Activated CD4-positive, alpha-beta T cell treated with anti-CD3 and anti-CD28 coated beads for 36 hours (primary cell): ENCODE measurements at regions of chr1 and their contacts with region 1.

Region 1: DNA sequence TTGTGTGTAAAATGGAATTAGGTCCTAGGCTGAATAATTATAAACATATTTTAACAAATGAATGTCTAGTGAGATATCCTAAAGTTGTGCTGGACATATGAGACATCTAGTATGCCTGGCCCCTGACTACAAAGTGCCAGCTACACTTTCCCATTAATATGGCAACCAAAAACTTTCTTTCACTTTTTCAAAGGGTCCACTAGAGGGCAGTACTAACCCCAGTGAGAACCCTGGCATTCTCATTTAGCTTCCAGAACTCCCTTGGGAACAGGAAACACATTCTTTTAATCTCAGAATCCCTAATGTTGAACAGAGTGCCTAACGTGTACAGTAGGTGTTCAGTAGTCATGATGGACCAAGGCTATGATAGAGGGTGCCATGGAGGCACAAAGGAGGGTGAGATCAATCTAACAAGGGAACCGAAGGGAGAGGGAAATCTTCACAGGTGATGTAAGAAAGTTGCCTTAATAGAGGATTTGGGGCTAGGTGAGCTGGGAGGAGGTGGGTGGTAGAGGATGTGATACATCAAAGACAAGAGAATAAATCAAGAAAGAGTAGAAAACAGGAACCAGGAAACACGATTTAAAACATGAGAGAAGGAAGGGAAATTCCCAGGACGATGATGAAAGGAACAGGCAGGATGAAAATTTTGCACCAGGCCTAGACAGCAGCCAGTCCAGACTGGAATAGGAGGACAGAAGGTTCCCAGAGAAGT is 41.6 kb downstream of the NSL1 start:
- DNase-seq: peak; percentile 27
- ATAC-seq: peak; percentile 30
- H3K4me3 Mint-ChIP-seq: peak overlapping the region; percentile 20
- H3K27ac Mint-ChIP-seq: peak overlapping the region; percentile 40
- H3K4me1 Mint-ChIP-seq: peaks cover 71% of the 10 kb centered on the region
- H3K27me3 Mint-ChIP-seq: no peaks in the 10 kb centered on the region

Region 2: DNA sequence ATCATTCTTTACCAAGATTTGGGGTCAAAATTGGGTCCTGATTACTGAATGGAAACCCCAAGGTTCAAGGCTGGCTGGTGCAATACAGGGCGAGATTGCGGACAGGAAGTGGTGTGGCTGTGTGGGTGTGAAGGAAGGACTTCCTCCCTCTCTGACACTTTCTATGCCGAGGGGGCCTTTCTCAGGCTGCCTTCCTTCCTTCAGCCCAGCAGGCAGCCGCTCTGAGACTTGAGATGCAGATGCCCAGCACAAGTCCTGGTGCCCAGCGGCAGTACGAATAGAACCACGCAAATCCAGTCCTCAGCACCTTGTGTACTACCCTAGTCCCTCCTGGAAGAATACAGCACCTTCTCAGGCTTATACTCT is 66.6 kb before region 1 on chr1:
- CTCF ChIA-PET with region 1: interaction called, 13 read pairs
- POLR2A ChIA-PET with region 1: no interaction called
- intact Hi-C with region 1: loop called in 1 of 2 experiments (anchors 1 kb)
- DNase-seq: peak; percentile 82
- ATAC-seq: peak; percentile 37
- H3K4me3 Mint-ChIP-seq: peak overlapping the region; percentile 39
- H3K27ac Mint-ChIP-seq: peak overlapping the region; percentile 83
- H3K4me1 Mint-ChIP-seq: peaks cover 50% of the 10 kb centered on the region
- H3K27me3 Mint-ChIP-seq: no peaks in the 10 kb centered on the region

Region 3: GRCh38 chr1:212721388-212722247 is 28.4 kb before region 1 on chr1:
- CTCF ChIA-PET with region 1: interaction called, 10 read pairs
- POLR2A ChIA-PET with region 1: interaction called, 3 read pairs
- intact Hi-C with region 1: loop called in 1 of 2 experiments (anchors 2 kb)
- DNase-seq: peak; percentile 66
- ATAC-seq: peak; percentile 82
- H3K4me3 Mint-ChIP-seq: peak overlapping the region; percentile 48
- H3K27ac Mint-ChIP-seq: peak overlapping the region; percentile 68
- H3K4me1 Mint-ChIP-seq: peaks cover 48% of the 10 kb centered on the region
- H3K27me3 Mint-ChIP-seq: peaks cover 5% of the 10 kb centered on the region

Region 4: GRCh38 chr1:212738330-212738729 is 11.6 kb before region 1 on chr1:
- CTCF ChIA-PET with region 1: interaction called, 18 read pairs
- POLR2A ChIA-PET with region 1: no interaction called
- intact Hi-C with region 1: no loop called
- DNase-seq: no peak
- ATAC-seq: peak; percentile 81
- H3K4me3 Mint-ChIP-seq: no peak overlapping the region
- H3K27ac Mint-ChIP-seq: peak overlapping the region; percentile 85
- H3K4me1 Mint-ChIP-seq: peaks cover 36% of the 10 kb centered on the region
- H3K27me3 Mint-ChIP-seq: no peaks in the 10 kb centered on the region

Region 5: DNA sequence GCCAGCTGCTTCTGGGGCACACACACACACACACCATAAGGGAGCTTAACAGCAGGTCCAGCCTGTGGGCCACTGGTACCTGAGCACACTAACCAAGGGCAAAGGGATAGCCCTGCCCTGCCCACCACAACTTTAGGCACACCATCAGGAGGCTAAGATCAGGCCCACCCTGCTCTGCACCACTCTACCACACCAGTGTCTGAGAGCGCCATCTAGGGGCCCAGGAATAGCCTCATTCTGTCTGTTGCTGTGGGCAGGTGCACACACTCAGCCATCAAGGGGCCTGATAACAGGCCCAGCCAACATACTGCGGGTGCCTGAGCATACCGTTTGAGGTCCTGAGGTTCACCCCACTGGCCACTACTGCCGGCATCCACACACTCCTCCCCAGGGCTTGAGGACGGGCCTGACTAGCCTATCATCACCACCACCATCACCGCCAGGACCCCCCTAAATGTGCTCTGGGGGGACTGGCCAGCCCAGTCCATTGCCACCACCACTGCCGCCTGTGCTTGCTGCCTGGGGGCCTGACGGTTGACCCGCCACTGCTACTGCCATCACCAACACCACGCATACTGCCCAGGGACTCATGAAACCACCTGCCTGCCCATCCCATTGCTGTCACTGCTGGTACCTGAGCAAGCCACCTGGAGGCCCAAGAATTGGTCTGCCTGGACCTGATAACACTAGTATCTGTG is 10.3 kb after region 1 on chr1:
- CTCF ChIA-PET with region 1: interaction called, 16 read pairs
- POLR2A ChIA-PET with region 1: no interaction called
- intact Hi-C with region 1: no loop called
- DNase-seq: peak; percentile 83
- ATAC-seq: peak; percentile 96
- H3K4me3 Mint-ChIP-seq: no peak overlapping the region
- H3K27ac Mint-ChIP-seq: no peak overlapping the region
- H3K4me1 Mint-ChIP-seq: peaks cover 22% of the 10 kb centered on the region
- H3K27me3 Mint-ChIP-seq: no peaks in the 10 kb centered on the region

Region 6: GRCh38 chr1:212774584-212774983 is 24.6 kb after region 1 on chr1:
- CTCF ChIA-PET with region 1: interaction called, 14 read pairs
- POLR2A ChIA-PET with region 1: no interaction called
- intact Hi-C with region 1: loop called (anchors 1 to 2 kb)
- DNase-seq: no peak
- ATAC-seq: peak; percentile 17
- H3K4me3 Mint-ChIP-seq: no peak overlapping the region
- H3K27ac Mint-ChIP-seq: no peak overlapping the region
- H3K4me1 Mint-ChIP-seq: peaks cover 38% of the 10 kb centered on the region
- H3K27me3 Mint-ChIP-seq: no peaks in the 10 kb centered on the region

Region 7: DNA sequence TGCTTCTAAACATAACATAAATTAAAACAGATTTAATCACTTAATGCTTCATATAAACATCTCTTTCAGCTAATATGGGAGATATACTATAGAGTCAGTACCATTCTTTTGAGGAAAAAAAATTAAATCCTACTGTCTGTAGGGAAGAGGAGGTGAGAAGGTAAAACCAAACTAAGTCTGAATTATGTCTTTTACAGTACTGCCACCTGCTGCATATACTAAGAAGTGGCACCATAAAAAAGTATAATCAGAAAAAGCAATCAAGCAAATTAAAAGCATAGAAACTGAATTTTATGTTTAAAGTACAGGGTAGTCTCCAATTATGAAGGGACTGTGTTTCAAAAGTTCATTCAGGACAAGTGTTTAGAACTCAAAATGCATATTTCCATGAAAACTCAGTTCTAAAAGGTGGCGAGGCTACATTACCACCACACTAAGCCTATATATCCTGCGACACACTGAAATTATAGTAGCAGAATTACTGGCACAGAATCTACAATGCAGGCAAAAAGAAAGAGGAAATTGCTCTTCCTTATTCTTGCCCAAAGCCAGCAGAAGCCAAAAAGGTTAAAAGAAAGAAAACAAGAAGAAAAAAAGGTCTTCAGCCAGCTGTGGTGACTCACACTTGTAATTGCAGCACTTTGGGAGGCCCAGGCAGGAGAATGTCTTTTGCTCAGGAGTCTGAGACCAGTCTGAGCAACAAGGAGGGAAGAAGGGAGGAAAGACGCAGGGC is 32.6 kb after region 1 on chr1:
- CTCF ChIA-PET with region 1: interaction called, 18 read pairs
- POLR2A ChIA-PET with region 1: no interaction called
- intact Hi-C with region 1: loop called in 1 of 2 experiments (anchors 5 kb)
- DNase-seq: no peak
- ATAC-seq: peak; percentile 73
- H3K4me3 Mint-ChIP-seq: no peak overlapping the region
- H3K27ac Mint-ChIP-seq: no peak overlapping the region
- H3K4me1 Mint-ChIP-seq: peaks cover 27% of the 10 kb centered on the region
- H3K27me3 Mint-ChIP-seq: no peaks in the 10 kb centered on the region